ENCODE measurements at regions of chr9 and their contacts with region 1.

Region 1: DNA sequence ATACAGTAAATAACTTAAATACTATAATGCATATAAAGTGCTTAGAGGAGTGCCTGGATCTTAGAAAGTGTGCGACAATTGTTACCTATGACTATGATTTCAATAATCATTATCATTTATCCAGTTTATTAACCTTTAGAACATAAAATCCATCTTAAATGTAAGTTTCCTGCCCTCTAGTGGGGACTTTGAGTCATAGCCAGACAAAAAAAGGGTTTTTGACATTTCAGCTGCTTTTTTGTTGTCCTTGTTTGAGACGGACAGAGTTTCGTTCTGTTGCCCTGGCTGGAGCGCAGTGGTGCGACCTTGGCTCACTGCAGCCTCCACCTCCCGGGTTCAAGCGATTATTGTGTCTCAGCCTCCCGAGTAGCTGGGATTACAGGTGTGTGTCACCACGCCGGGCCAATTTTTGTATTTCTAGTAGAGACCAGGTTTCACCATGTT is 9.7 kb upstream of the C9orf152 start:
- DNase-seq: peak; percentile 65
- H3K4me3 ChIP-seq: no peak overlapping the region
- H3K27ac ChIP-seq: no peak overlapping the region
- H3K4me1 ChIP-seq: no peaks in the 10 kb centered on the region
- H3K27me3 ChIP-seq: peaks cover 4 to 11% of the 10 kb centered on the region in 2 experiments
- CTCF ChIP-seq: peak; percentile 47 to 62
- POLR2A ChIP-seq: no peak

Region 2: GRCh38 chr9:109520478-109521132 is 697.1 kb before region 1 on chr9:
- CTCF ChIA-PET with region 1: no interaction called
- POLR2A ChIA-PET with region 1: no interaction called
- dilution Hi-C with region 1: no loop called
- intact Hi-C with region 1: no loop called
- DNase-seq: peak; percentile 66
- H3K4me3 ChIP-seq: no peak overlapping the region
- H3K27ac ChIP-seq: no peak overlapping the region
- H3K4me1 ChIP-seq: no peaks in the 10 kb centered on the region
- H3K27me3 ChIP-seq: peaks cover 0 to 2% of the 10 kb centered on the region in 2 experiments
- CTCF ChIP-seq: peak; percentile 81 to 83
- POLR2A ChIP-seq: no peak

Region 3: DNA sequence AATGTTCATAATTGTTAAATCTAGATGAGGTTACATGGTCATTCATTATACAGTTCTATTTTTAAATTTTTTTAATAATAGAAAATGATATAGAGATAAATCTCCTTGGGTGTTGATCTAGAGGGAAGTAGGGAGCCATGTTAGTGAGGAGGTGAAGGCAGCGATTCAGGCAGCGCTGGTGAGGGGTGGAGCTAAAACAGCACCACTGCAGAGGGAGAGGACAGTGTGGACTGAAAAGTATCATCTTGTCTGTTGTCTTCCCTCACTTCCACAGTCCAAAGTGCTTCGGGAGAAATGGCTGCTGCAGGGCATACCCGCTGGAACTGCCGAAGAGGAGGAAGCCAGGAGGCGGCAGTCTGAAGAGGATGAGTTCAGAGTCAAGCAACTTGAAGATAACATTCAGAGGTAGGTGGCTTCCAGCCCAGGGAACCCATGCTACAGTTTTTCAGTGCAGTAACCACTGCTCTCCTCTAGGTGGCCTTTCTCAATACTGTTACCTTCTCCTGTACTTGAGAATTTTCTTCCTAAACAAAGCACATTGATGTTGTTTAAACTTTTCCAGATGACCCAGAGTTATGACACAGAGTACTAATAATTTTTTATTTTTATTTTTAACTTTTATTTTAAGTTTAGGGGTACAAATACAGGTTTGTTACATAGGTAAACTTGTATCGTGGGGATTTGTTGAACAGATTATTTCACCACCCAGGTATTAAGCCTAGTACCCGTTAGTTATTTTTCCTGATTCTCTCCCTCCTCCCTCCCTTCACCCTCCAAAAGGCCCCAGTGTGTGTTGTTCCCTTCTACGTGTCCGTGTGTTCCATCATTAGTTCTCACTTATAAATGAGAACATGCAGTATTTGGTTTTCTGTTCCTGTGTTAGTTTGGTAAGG is 337.2 kb before region 1 on chr9:
- CTCF ChIA-PET with region 1: interaction called, 3 read pairs
- POLR2A ChIA-PET with region 1: no interaction called
- dilution Hi-C with region 1: no loop called
- intact Hi-C with region 1: loop called (anchors 2 kb)
- DNase-seq: peak; percentile 49
- H3K4me3 ChIP-seq: no peak overlapping the region
- H3K27ac ChIP-seq: no peak overlapping the region
- H3K4me1 ChIP-seq: no peaks in the 10 kb centered on the region
- H3K27me3 ChIP-seq: peaks cover 4 to 10% of the 10 kb centered on the region in 2 experiments
- CTCF ChIP-seq: peak; percentile 55 to 74
- POLR2A ChIP-seq: no peak

Region 4: DNA sequence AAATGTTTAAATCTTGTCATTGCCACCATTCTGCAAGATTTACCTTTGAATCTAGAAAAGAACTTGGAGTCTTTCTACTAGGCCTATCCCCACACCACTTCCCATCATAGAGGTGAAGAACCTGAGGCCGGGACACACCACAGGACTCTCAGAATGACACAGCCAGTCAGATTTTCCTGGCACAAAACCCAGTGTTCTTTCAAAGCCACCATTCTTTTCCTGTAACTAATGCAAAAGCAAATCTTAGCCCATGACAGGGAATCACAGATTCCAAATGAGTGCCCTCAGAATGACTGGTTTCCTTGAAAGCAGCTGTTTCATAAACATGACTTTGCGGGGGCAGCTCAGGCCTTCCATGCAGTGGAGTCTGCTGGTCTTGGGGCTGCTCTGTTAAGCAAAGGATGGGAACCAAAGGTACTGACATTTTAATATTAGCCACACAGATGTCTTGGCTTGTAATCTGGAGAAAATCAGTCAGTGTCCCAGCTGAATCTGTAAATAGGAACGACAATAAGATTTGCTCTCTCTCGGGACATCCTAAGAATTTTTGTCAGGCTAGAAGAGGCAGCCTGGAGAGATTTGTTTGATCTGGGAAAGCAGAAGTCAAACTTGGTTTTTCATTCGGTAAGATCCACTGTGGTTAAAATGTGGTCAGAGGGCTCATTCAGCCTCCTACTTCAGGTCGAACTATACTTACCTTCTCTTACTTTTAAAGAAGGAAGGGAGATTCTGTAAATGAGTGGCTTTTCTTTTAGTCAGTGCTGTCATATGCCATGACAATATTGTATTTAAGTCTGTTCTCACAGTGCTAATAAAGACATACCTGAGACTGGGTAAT is 322.5 kb before region 1 on chr9:
- CTCF ChIA-PET with region 1: interaction called, 3 read pairs
- POLR2A ChIA-PET with region 1: no interaction called
- dilution Hi-C with region 1: no loop called
- intact Hi-C with region 1: loop called (anchors 5 kb)
- DNase-seq: no peak
- H3K4me3 ChIP-seq: no peak overlapping the region
- H3K27ac ChIP-seq: no peak overlapping the region
- H3K4me1 ChIP-seq: no peaks in the 10 kb centered on the region
- H3K27me3 ChIP-seq: peaks cover 6 to 10% of the 10 kb centered on the region in 2 experiments
- CTCF ChIP-seq: no peak
- POLR2A ChIP-seq: no peak

Region 5: GRCh38 chr9:110192531-110193261 is 25.0 kb before region 1 on chr9:
- CTCF ChIA-PET with region 1: interaction called, 79 read pairs
- POLR2A ChIA-PET with region 1: no interaction called
- dilution Hi-C with region 1: no loop called
- intact Hi-C with region 1: no loop called
- DNase-seq: peak; percentile 67
- H3K4me3 ChIP-seq: no peak overlapping the region
- H3K27ac ChIP-seq: no peak overlapping the region
- H3K4me1 ChIP-seq: no peaks in the 10 kb centered on the region
- H3K27me3 ChIP-seq: no peaks in the 10 kb centered on the region
- CTCF ChIP-seq: no peak
- POLR2A ChIP-seq: no peak

Region 6: DNA sequence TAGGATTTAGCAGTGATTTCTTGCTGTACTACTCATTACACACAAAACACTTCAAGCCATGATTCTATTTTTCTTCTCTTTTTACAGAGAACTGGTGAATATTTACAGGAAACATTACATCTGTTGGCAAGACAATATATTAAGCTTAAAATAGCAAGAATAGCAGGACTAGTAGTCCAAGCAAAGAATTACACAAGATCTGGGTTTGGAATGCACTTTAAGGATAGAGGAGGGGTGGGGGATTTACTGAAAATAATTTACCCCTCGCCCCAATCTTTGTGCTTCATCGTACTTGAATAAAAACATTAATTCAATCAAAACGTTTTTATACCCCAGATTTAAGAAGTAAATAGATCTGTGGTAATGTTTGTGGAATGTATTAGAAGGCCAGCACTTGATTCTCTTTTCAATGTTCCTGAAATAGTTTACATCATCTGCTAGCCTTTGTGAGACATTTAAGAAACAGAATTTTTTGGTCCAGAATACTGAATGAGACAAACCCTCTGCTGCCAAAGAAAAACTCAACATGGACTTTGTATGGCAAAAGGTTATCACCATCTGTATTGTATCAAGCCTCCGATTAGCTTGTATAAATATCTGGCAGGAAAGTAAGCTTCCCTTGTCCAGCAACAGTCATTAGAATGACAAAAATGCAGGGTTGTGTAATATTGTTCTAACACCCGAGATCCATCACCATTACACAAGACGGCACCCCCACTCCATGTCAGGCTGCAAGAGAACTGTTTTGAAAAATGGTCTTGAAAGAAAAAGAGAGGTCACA is 338.1 kb after region 1 on chr9:
- CTCF ChIA-PET with region 1: no interaction called
- POLR2A ChIA-PET with region 1: no interaction called
- dilution Hi-C with region 1: no loop called
- intact Hi-C with region 1: no loop called
- DNase-seq: peak; percentile 96
- H3K4me3 ChIP-seq: peak overlapping the region in 1 of 3 experiments; percentile 23
- H3K27ac ChIP-seq: peak overlapping the region; percentile 51
- H3K4me1 ChIP-seq: peaks cover 16% of the 10 kb centered on the region
- H3K27me3 ChIP-seq: no peaks in the 10 kb centered on the region
- CTCF ChIP-seq: no peak
- POLR2A ChIP-seq: peak; percentile 56